G401 (cell line): ENCODE measurements at regions of chr20 and their contacts with region 1.

Region 1: DNA sequence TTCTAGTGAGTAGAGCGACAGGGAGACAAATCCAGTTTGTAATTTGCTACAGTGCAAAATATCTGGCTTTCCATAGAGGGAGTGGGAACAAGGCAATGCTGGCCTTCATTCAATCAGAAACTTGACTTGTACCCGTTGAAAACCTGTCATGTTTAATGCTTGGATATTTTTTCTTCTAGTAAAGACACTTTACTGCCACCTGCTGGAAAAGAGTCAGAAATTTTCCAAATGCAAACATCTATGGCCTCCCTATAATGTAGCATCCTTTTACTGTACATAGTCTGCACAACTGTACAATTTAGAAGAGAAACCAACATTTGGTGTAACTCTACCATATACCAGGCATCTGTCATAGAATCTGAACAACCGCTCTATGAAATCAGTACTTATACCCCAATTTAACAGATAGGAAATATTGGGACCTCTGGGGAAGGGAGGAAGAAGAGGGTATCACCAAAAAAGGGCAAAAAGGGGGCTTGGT is 16.7 kb upstream of the TBC1D20 start:
- DNase-seq: peak; percentile 84

Region 2: GRCh38 chr20:645318-646106 is 166.5 kb after region 1 on chr20:
- in situ Hi-C with region 1: loop called (anchors 10 kb)
- DNase-seq: peak; percentile 56